HEK293 (cell line): ENCODE measurements at regions of chr6 and their contacts with region 1.

Region 1: DNA sequence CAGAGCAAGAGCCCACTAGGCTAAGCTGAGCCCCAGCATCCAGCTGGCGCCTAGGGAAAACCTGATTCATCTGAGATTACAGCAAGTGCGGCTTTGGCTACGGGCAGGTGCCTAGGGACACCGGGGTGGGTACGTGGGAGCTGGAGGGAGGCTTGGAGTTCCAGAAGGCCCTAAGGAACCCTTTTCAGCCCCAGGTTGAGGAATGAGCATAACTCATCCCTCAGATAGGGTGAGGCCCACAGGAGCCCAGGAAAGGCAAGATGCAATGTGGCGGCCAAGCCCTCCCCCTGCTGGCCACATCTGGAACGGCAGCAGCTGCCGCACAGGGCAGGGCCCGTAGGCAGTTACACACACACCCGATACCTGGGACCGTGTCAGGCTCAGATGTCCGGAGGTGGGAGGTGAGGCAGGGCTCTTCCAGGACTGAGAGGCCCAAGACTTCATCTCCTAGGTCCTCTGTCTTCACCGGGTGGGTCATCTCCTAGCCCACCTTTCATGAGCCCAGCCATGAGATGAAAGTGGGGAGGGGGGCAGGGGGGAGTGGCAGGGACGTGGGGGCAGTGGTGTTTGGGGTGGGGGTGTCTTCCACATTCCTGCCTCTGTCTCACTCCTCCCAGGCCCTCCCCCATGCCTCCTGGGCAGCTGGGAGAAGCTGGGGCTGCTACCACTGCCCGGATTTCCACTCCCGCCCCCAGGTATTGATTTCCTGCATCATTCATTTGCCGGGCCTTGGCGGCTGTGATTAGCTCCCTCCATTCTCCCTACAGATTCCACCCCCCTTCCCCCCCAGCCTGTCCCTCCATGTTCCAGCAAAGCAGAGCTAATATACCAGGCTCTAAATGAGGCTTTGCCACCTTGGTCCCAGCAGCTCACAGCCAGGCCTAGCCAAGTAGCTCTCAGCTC is 5.5 kb downstream of the MDGA1 start:
- H3K4me3 ChIP-seq: no peak overlapping the region
- H3K27ac ChIP-seq: no peak overlapping the region
- H3K4me1 ChIP-seq: peaks cover 11% of the 10 kb centered on the region; the same call in 1 of the 2 replicates
- CTCF ChIP-seq: peak; percentile 96

Region 2: DNA sequence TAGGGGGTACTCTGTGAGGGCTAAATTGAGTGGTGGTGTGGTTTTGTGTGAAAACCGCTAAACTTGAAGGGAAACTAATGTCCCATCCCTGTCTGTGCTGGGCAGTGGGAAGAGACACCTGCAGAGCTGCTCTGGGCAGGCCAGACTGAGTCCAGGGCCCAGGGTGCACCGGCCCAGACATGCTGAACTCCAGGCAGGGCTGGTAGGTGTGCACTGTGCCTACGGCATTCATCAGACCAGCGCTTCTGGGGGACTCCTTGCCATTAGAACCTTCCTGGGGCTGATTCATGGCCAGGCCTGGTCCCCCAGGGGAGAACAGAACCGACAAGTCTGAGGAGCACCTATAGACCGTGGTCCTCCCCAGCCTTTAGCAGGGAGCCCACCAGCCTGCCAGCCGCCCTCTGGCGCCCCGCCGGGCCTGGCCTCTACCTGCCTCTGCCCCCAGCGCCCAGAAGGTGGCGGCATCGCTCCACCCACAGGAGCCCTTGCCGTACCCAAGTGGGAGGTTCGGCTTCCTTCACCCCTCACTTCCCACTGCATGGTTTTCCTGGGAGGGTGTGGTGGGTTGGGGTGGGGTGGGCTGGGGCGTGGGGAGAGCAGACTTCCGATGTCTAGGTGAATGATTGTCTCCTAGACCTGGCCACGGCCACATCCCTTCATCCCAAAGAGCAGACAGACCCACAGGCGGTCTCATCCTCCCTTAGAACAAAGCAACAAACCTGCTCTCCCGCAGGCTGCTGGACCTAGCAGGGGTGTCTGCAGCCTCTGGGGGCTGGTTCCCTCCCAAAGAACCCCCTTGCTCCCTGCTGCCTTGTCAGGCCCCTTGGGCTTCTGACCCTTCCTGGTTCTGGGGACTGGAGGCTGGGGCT is 208.0 kb before region 1 on chr6:
- CTCF ChIA-PET with region 1: interaction called, 18 read pairs
- POLR2A ChIA-PET with region 1: no interaction called
- H3K4me3 ChIP-seq: no peak overlapping the region
- H3K27ac ChIP-seq: no peak overlapping the region
- H3K4me1 ChIP-seq: no peaks in the 10 kb centered on the region; the same call in 1 of the 2 replicates
- CTCF ChIP-seq: peak; percentile 89

Region 3: DNA sequence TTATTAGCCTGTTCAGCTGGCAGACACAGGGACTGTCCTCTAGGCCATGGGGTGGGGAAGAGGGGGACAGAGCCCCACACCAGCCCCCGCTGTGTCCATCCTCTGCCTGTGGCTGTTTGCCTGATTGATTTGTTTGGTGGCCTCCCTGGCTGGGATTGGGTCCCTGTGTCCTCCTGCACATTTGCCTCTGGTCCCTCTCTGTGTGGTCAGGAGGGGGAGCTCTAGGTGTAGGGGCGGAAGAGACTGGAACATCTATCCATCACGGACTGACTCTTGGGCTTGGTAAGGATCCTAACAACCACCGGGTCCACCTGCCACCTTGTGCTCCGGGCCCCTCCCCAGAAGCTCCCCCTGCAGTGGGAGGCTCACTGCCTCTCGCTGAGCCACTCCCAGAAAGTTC is 154.0 kb before region 1 on chr6:
- CTCF ChIA-PET with region 1: interaction called, 45 read pairs
- POLR2A ChIA-PET with region 1: interaction called, 3 read pairs
- H3K4me3 ChIP-seq: no peak overlapping the region
- H3K27ac ChIP-seq: no peak overlapping the region
- H3K4me1 ChIP-seq: peaks cover 3% of the 10 kb centered on the region; the same call in 1 of the 2 replicates
- CTCF ChIP-seq: peak; percentile 75

Region 4: GRCh38 chr6:37566111-37566949 is 125.8 kb before region 1 on chr6:
- CTCF ChIA-PET with region 1: interaction called, 38 read pairs
- POLR2A ChIA-PET with region 1: no interaction called
- H3K4me3 ChIP-seq: no peak overlapping the region
- H3K27ac ChIP-seq: no peak overlapping the region
- H3K4me1 ChIP-seq: no peaks in the 10 kb centered on the region
- CTCF ChIP-seq: peak; percentile 90

Region 5: GRCh38 chr6:37576336-37576813 is 115.8 kb before region 1 on chr6:
- CTCF ChIA-PET with region 1: interaction called, 11 read pairs
- POLR2A ChIA-PET with region 1: no interaction called
- H3K4me3 ChIP-seq: no peak overlapping the region
- H3K27ac ChIP-seq: no peak overlapping the region
- H3K4me1 ChIP-seq: no peaks in the 10 kb centered on the region
- CTCF ChIP-seq: no peak

Region 6: GRCh38 chr6:37607944-37608343 is 84.2 kb before region 1 on chr6:
- CTCF ChIA-PET with region 1: interaction called, 15 read pairs
- POLR2A ChIA-PET with region 1: no interaction called
- H3K4me3 ChIP-seq: no peak overlapping the region
- H3K27ac ChIP-seq: no peak overlapping the region
- H3K4me1 ChIP-seq: no peaks in the 10 kb centered on the region
- CTCF ChIP-seq: no peak

Region 7: GRCh38 chr6:37679539-37680476 is 12.3 kb before region 1 on chr6:
- CTCF ChIA-PET with region 1: interaction called, 13 read pairs
- POLR2A ChIA-PET with region 1: interaction called, 8 read pairs
- H3K4me3 ChIP-seq: no peak overlapping the region
- H3K27ac ChIP-seq: no peak overlapping the region
- H3K4me1 ChIP-seq: no peaks in the 10 kb centered on the region; the same call in 1 of the 2 replicates
- CTCF ChIP-seq: no peak